ENCODE measurements at regions of chr16 and their contacts with region 1.

Region 1: GRCh38 chr16:71367241-71367976 is 8.9 kb downstream of the CALB2 start:
- DNase-seq: peak; percentile 92
- ATAC-seq: peak; percentile 99
- H3K4me3 Mint-ChIP-seq: no peak overlapping the region
- H3K27ac Mint-ChIP-seq: no peak overlapping the region
- H3K4me1 Mint-ChIP-seq: no peaks in the 10 kb centered on the region
- H3K27me3 Mint-ChIP-seq: peaks cover 4% of the 10 kb centered on the region; the same call in 1 of the 2 replicates
- CTCF ChIP-seq: peak; percentile 80

Region 2: DNA sequence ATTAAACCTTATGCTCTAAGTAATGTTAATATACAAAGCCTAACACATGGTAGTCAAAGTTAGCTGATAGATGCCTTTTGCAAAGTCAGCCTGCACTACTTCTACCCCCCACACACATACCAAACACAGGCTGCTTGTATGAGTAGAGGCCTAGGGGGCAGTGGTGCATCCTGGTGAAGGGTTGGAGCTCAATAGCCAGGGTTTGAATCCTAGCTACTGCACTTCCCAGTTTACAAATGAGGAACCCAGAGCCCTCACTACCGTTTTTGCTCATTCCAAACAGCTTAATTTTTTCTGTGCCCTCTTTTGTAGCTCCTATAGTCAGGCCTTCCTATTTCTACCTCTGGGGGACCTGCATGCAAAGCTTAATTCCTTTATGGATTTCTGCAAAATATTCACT is 118.0 kb before region 1 on chr16:
- CTCF ChIA-PET with region 1: interaction called, 10 read pairs
- POLR2A ChIA-PET with region 1: no interaction called
- DNase-seq: peak; percentile 34
- ATAC-seq: peak; percentile 93
- H3K4me3 Mint-ChIP-seq: no peak overlapping the region
- H3K27ac Mint-ChIP-seq: no peak overlapping the region
- H3K4me1 Mint-ChIP-seq: peaks cover 23% of the 10 kb centered on the region
- H3K27me3 Mint-ChIP-seq: no peaks in the 10 kb centered on the region
- CTCF ChIP-seq: no peak

Region 3: GRCh38 chr16:71344315-71344905 is 23.0 kb before region 1 on chr16:
- CTCF ChIA-PET with region 1: interaction called, 11 read pairs
- POLR2A ChIA-PET with region 1: no interaction called
- DNase-seq: no peak
- ATAC-seq: 0 out of 2 replicates have a peak, but pooled peaks have one; percentile 22
- H3K4me3 Mint-ChIP-seq: no peak overlapping the region
- H3K27ac Mint-ChIP-seq: no peak overlapping the region
- H3K4me1 Mint-ChIP-seq: peaks cover 10% of the 10 kb centered on the region
- H3K27me3 Mint-ChIP-seq: no peaks in the 10 kb centered on the region; the same call in 1 of the 2 replicates
- CTCF ChIP-seq: no peak

Region 4: GRCh38 chr16:71383054-71383773 is 15.8 kb after region 1 on chr16:
- CTCF ChIA-PET with region 1: interaction called, 13 read pairs
- POLR2A ChIA-PET with region 1: interaction called, 3 read pairs
- DNase-seq: no peak
- ATAC-seq: peak; percentile 25
- H3K4me3 Mint-ChIP-seq: no peak overlapping the region
- H3K27ac Mint-ChIP-seq: 0 out of 2 replicates have a peak overlapping the region, but pooled peaks have one; percentile 0
- H3K4me1 Mint-ChIP-seq: peaks cover 54% of the 10 kb centered on the region
- H3K27me3 Mint-ChIP-seq: no peaks in the 10 kb centered on the region; the same call in 1 of the 2 replicates
- CTCF ChIP-seq: no peak

Measured in WTC11 (cell line).